ENCODE measurements at regions of chr2 and their contacts with region 1.

Region 1: DNA sequence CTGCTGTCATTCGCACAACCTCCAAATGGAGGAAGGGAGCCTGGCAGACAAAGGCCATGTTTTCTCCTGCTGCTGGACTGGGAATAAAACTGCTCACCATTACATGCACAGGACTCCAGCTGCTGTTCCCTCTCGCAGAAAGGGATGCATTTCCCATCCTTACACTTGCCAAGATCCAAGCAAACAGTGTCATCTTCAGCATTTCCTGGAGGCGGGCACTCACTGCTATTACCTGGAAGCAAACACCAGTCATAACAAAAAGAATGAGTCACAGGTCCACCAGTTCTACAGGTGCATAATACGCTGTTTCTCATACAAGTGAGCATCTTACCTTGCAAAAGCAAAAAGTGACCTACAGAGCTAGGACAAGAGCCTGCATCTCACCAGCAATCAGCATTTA is 22.7 kb downstream of the IAH1 start:
- DNase-seq: no peak
- ATAC-seq: no peak

Region 2: GRCh38 chr2:9440058-9440727 is 56.8 kb before region 1 on chr2:
- intact Hi-C with region 1: no loop called
- DNase-seq: no peak
- ATAC-seq: no peak

Region 3: DNA sequence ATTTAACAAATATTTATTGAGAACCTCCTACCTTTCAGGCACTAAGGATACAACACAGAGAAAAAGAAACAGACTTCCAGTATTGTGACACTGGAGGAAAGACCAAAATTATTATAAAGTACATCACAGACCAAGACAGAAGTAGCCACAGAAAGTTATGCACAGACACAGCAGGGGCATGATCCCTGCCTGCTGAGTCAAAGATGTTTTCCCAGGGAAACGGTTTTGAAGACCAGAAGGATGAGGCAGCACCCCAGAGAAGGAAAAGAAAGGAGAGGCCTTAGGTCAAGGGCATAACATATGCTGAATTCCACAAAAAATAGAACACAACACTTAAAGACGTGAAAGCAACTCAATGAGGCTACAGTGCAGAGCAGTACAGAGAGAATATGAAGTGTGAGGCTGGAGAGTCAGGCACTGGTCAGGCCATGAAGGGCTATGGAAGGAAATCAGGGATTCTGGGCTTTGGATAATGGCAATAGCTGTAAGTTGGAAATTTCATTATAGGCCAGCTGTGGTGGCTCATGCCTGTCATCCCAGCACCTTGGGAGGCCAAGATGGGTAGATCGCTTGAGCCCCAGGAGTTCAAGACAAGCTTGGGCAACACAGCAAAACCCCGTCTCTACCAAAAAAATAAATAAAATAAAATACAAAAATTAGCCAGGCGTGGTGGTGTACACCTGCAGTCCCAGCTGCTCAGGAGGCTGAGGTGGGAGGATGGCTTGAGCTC is 50.4 kb after region 1 on chr2:
- intact Hi-C with region 1: loop called (anchors 2 kb)
- DNase-seq: no peak
- ATAC-seq: no peak

Measured in sciatic nerve (tissue), 2 donors.